ENCODE measurements at regions of chr3 and their contacts with region 1.

Region 1: GRCh38 chr3:103976931-103977339 is 1389.8 kb upstream of the ALCAM start:
- DNase-seq: no peak
- ATAC-seq: peak; percentile 96
- H3K4me3 ChIP-seq: no peak overlapping the region
- H3K27ac ChIP-seq: no peak overlapping the region
- H3K4me1 ChIP-seq: no peaks in the 10 kb centered on the region
- H3K27me3 ChIP-seq: no peaks in the 10 kb centered on the region
- CTCF ChIP-seq: no peak
- EP300 ChIP-seq: no peak
- POLR2A ChIP-seq: no peak
- RAD21 ChIP-seq: no peak

Region 2: DNA sequence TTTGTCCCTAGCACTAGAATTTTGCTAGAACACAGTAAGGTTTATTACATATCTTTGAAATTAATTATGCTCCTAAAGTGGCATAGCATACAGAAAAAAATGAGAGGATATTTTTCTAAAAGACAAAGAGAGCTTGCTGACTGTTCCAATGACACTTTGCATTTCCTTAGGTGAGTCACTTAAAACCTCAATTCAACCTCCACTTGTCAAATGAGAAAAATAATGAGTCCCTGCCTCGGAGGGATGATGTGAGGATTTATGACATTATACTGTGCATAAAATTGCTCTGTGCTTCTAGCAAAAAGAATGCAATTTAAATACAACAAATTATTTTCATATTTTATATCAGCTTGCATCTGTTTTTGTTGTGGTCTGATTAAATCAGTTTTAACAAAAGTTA is 27.2 kb before region 1 on chr3:
- CTCF ChIA-PET with region 1: interaction called, 5 read pairs
- POLR2A ChIA-PET with region 1: interaction called, 3 read pairs
- RAD21 ChIA-PET with region 1: interaction called, 6 read pairs
- SMC1A ChIA-PET with region 1: interaction called, 13 read pairs
- in situ Hi-C with region 1: no loop called
- intact Hi-C with region 1: no loop called
- DNase-seq: no peak
- ATAC-seq: no peak
- H3K4me3 ChIP-seq: no peak overlapping the region
- H3K27ac ChIP-seq: no peak overlapping the region
- H3K4me1 ChIP-seq: no peaks in the 10 kb centered on the region
- H3K27me3 ChIP-seq: no peaks in the 10 kb centered on the region
- CTCF ChIP-seq: no peak
- EP300 ChIP-seq: no peak
- POLR2A ChIP-seq: no peak
- RAD21 ChIP-seq: no peak

Region 3: DNA sequence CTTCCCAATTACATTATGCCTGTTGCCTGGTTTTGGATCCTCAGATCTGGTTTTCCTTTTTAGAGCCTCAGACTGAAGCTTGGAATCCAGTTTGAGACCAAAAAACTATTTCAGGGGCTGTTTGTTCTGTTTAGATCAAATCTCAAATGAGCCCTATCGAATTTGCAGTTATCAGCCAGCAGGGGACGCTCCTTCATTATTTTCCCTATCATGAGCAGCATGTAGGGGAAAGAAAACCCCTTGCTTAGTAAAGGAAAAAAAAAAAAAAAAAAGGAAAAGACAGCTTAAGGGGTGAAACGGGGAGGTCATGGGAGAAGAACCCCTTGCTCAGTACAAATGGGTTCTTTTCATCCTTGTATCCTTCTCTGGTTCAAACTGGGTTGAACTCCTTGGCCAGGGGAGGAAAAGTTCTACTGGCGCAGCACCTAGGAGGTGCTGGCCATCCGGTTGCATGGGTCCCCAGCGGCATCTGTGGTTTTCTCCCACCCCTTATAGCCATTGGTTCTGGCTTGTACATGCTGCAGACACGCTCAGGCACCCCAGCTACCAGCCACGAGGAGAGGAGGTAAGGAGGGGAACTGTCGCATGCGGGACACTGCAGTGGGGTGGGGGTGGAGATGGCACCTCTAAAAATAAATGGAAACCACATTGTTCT is 14.7 kb after region 1 on chr3:
- CTCF ChIA-PET with region 1: interaction called, 25 read pairs
- POLR2A ChIA-PET with region 1: interaction called, 3 read pairs
- RAD21 ChIA-PET with region 1: interaction called, 8 read pairs
- SMC1A ChIA-PET with region 1: interaction called, 29 read pairs
- in situ Hi-C with region 1: no loop called
- intact Hi-C with region 1: no loop called
- DNase-seq: no peak
- ATAC-seq: peak; percentile 72
- H3K4me3 ChIP-seq: no peak overlapping the region
- H3K27ac ChIP-seq: no peak overlapping the region
- H3K4me1 ChIP-seq: no peaks in the 10 kb centered on the region
- H3K27me3 ChIP-seq: no peaks in the 10 kb centered on the region
- CTCF ChIP-seq: peak; percentile 46 to 54 (median 54)
- EP300 ChIP-seq: no peak
- POLR2A ChIP-seq: no peak
- RAD21 ChIP-seq: peak; percentile 60

Region 4: DNA sequence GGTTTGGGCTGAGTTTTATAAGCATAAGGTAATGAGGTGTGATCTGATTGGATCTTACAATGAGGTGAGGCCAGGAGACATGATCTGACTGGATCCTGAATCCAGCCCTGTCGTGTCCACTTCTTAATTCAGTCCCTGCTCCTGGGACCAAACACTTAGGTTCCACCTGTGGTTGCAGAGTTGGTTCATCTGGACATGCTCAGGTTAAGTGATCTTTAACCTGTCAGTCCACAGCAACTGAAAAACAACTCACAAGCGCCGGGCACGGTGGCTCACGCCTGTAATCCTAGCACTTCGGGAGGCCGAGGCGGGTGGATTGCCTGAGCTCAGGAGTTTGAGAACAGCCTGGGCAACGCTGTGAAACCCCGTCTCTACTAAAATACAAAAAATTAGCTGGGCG is 710.4 kb after region 1 on chr3:
- CTCF ChIA-PET with region 1: no interaction called
- POLR2A ChIA-PET with region 1: no interaction called
- RAD21 ChIA-PET with region 1: no interaction called
- SMC1A ChIA-PET with region 1: no interaction called
- in situ Hi-C with region 1: no loop called
- intact Hi-C with region 1: no loop called
- DNase-seq: no peak
- ATAC-seq: no peak
- H3K4me3 ChIP-seq: no peak overlapping the region
- H3K27ac ChIP-seq: no peak overlapping the region
- H3K4me1 ChIP-seq: no peaks in the 10 kb centered on the region
- H3K27me3 ChIP-seq: no peaks in the 10 kb centered on the region
- CTCF ChIP-seq: no peak
- EP300 ChIP-seq: no peak
- POLR2A ChIP-seq: no peak
- RAD21 ChIP-seq: no peak